Activated CD4-positive, alpha-beta T cell treated with anti-CD3 and anti-CD28 coated beads for 36 hours (primary cell): ENCODE measurements at regions of chr3 and their contacts with region 1.

Region 1: DNA sequence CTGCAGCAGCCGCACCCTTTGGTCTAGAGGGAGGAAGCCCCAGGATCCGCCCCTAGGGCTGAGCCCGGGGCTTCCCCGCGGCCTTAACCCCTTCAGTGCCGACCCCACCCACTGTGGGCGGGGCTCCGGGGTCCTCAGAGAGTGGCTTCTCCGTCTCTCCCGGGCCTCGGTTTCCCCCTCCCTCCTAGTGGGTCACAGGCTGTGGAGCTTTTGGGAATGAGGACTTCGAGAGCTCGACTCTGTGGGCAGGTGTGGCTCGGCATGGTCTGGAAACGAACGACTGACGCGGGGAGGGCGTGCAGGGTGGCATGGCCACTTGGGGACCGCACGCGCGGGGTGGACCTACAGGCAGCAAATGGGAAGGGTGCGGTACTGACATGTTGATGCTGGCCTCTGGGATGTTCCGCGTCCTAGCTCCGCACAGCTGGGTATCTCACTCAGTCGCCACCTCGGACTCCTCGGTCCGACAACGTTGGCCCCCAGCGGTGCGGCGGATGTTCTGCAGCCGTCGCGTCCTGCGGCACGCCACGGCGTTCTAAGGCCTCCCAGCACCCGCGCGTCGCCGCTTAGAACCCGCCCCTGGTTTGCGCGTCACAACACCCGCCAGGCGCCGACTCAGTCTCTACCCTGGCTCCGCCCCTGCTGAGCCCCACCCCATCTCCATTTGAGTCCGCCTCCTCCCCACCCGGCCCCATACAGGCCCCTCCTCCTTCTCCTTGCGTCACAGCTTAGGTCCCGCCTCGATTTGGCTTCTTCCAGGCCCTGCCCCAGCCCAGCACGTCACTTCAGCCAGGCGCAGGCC is at the starts of genes HYAL3 and NAA80:
- DNase-seq: peak; percentile 100
- ATAC-seq: peak; percentile 89
- H3K4me3 Mint-ChIP-seq: peak within 1 kb of the TSS; percentile 97
- H3K27ac Mint-ChIP-seq: peak within 1 kb of the TSS; percentile 96
- H3K4me1 Mint-ChIP-seq: peaks cover 13% of the 10 kb centered on the region
- H3K27me3 Mint-ChIP-seq: no peaks in the 10 kb centered on the region
- total RNA-seq, gene HYAL3: 4.5 to 5.4 TPM
- total RNA-seq, gene NAA80: 17.6 to 18.7 TPM

Region 2: DNA sequence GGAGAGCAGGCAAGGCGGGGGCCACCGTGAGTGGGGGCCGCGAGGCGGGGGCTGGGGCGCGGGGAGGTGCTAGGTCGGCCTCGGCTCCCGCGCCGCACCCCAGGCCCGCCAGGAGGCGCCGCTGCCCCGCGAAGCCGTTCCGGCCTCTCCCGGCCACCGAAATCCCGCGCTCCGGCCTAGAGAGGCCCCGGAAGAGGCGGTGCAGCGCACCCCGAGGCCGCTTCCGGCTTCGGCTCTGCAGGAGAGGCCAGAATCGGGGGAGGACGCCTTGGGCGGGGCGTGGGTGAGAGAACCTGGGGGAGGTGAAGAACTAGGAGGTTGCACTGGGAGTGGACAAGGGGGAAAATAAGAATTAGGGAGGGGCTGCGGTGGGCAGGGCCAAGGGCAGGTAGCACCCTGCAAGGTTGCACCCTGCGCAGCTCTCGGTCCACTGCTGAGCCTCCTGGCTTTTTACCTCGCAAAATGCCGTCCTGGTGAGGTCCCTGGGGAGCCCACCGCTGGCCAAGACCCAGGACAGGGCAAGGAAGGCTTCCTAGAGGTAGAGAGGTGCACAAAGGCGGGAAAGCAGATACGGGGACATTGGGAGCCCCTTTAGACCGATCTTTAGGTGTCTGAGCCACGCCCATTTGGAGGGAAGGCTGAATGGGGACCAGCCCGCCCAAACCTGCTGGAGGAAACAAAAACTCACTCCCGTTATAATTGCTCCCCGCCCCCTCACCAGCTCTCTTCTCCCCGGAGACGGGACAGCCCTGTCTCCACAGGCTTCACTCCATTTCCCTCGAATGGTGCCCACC is 71.5 kb before region 1 on chr3:
- CTCF ChIA-PET with region 1: no interaction called
- POLR2A ChIA-PET with region 1: interaction called, 11 read pairs
- intact Hi-C with region 1: loop called in 1 of 2 experiments (anchors 2 kb)
- DNase-seq: peak; percentile 95
- ATAC-seq: peak; percentile 83
- H3K4me3 Mint-ChIP-seq: peak overlapping the region; percentile 79
- H3K27ac Mint-ChIP-seq: peak overlapping the region; percentile 88
- H3K4me1 Mint-ChIP-seq: peaks cover 22% of the 10 kb centered on the region
- H3K27me3 Mint-ChIP-seq: no peaks in the 10 kb centered on the region

Region 3: DNA sequence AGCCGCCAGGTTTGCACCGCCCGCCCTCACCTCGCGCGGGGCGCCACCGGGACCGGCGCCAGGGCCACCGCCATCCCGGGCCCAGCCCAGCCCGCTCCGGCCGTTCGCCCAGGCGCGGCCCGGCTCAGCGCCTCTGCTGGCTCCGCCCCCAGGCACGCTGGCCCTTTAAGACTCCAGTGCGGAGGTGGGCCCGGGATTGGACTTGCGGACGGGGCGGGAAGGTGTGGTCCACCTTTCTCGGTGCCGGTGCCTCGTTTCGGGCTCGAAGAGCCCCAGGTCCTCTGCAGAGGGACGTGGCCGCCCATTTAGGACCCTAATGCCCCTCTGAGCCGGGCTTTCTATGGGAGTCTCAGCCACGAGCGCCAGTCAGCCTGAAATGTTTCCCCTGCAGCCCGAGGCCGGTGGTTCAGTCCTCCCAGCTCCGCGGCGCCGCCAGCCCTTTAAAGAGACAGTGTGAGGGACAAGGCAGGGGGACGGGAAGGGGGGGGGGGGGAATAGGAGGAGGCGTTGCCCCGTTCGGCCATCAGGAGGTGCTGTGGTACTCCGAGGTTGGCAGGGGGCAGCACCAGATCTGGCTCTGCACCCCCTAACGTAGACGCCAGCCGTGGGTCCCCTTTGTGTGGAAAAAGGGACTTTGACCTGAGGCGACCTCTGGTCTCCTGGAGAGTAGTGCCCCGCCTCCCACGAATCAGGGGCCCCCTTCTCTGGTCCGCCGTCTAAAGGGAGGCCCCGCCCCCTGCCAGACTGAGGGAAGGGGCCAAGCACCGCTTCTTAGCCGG is 22.5 kb after region 1 on chr3:
- CTCF ChIA-PET with region 1: interaction called, 16 read pairs
- POLR2A ChIA-PET with region 1: interaction called, 3 read pairs
- intact Hi-C with region 1: loop called (anchors 1 kb)
- DNase-seq: peak; percentile 90
- ATAC-seq: peak; percentile 79
- H3K4me3 Mint-ChIP-seq: peak overlapping the region; percentile 84
- H3K27ac Mint-ChIP-seq: peak overlapping the region; percentile 85
- H3K4me1 Mint-ChIP-seq: peaks cover 38% of the 10 kb centered on the region
- H3K27me3 Mint-ChIP-seq: no peaks in the 10 kb centered on the region

Region 4: DNA sequence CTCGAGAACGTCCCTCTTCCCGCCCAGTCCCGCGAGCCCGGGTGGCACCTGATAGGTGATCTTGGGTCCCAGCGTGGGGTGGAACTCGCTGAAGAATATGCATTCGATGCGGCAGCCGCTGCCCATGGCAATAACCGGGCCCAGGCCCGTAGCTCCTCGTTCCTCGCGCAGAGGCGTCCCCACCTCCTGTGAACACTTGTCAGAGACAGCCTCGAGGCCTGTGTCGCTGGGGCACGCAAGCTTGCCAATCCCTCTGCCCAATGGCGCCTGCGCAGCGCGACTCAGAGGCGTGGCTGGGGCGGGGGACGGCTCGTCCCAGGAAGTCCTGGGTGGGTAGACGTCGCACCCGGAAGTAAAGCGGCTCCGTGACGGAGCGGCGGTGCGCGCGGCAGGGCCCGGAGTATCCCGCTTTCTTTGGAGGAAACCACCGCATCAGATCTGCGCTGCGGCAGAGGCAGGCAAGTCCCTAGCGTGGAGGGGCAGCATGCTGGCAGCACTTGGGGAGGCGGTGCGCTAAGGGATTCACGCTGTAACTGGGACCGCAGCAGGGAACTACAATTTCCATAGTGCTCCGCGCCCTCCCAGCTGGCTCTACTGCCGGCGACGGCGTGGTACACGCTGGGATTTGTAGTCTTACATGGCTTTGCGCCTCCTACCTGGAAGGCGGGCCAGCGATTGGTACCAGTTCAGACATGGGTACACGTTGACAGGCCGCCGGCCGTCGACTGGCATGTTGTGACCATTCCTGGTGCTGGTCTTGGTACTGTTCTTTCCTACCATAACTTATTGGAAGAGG is 51.7 kb after region 1 on chr3 and contains the starts of genes CYB561D2 and NPRL2:
- CTCF ChIA-PET with region 1: interaction called, 3 read pairs
- POLR2A ChIA-PET with region 1: interaction called, 4 read pairs
- intact Hi-C with region 1: loop called in 1 of 2 experiments (anchors 1 kb)
- DNase-seq: peak; percentile 99
- ATAC-seq: peak; percentile 90
- H3K4me3 Mint-ChIP-seq: peak within 1 kb of the TSS; percentile 90
- H3K27ac Mint-ChIP-seq: peak within 1 kb of the TSS; percentile 97
- H3K4me1 Mint-ChIP-seq: peaks cover 55% of the 10 kb centered on the region
- H3K27me3 Mint-ChIP-seq: no peaks in the 10 kb centered on the region
- total RNA-seq, gene CYB561D2: 10.3 to 14.3 TPM
- total RNA-seq, gene NPRL2: 42.5 to 43.0 TPM

Region 5: DNA sequence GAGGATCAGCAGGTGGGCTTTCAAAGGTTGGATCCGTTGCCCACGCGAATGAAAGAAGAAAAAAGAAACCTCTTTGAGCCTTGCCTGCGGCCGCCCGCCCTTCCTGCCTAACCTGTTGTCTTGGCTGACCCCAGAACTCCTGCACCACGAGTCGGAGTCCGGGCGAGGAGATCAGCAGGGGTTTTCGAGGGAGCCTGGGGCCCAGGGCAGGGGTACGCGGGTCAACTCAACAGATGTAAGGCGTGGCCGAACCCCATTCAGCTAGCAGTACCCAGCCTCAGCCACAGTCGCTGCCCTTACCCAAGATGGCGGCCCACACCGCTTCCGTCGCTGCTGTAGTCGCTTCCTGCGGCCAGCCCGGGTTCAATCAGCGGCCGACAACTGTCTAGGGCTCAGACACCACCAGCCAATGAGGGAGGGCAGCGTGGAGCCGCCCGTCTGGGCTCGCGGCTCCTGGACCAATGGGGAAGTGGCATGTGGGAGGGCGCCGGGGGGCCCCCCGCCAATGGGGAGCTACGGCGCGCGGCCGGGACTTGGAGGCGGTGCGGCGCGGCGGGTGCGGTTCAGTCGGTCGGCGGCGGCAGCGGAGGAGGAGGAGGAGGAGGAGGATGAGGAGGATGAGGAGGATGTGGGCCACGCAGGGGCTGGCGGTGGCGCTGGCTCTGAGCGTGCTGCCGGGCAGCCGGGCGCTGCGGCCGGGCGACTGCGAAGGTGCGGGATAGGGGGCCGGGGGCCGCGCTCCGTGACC is 1085.9 kb after region 1 on chr3 and contains the start of gene MANF:
- CTCF ChIA-PET with region 1: no interaction called
- POLR2A ChIA-PET with region 1: no interaction called
- intact Hi-C with region 1: loop called in 1 of 2 experiments (anchors 2 kb)
- DNase-seq: peak; percentile 99
- ATAC-seq: peak; percentile 97
- H3K4me3 Mint-ChIP-seq: peak within 1 kb of the TSS; percentile 93
- H3K27ac Mint-ChIP-seq: peak within 1 kb of the TSS; percentile 99
- H3K4me1 Mint-ChIP-seq: peaks cover 46% of the 10 kb centered on the region
- H3K27me3 Mint-ChIP-seq: no peaks in the 10 kb centered on the region
- total RNA-seq, gene MANF: 124 to 129 TPM